ENCODE measurements at regions of chr22 and their contacts with region 1.

Region 1: GRCh38 chr22:31646186-31647089 is 15.6 kb downstream of the PISD start:
- DNase-seq: peak; percentile 99
- H3K4me3 ChIP-seq: no peak overlapping the region
- H3K27ac ChIP-seq: peak overlapping the region; percentile 95
- H3K4me1 ChIP-seq: peaks cover 47% of the 10 kb centered on the region
- H3K27me3 ChIP-seq: no peaks in the 10 kb centered on the region
- CTCF ChIP-seq: no peak

Region 2: DNA sequence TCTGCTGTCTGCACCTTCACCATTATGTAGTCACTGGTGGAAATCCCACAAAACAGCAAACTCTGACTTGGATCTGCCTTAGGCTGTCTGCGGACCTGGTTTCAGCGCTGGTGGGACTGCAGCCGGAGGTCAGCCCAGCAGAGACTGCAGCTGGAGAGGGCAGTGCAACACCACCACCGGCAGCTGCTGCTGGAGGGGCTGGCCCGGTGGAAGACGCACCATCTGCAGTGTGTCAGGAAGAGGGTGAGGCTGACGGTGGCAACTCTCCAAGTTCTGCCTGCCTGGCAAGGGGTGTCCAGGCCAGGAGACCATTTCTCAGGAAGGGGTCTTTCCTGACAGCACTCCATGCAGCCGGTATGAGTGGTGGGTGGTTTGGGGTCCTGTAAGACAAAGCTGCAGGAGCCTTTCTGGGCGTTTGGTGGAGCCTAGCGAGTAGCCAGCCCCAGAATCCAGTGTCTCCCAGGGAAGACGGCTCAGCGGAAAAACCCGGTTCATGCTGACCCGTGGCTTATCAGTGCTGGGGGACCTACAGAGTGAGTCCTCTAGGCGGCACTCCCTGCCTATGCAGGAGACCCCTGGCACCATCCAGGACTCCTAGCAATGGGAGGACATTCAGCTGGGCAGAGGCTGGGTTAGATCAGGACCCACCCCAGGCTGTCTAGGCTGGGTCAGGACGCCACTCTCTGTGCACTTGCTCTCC is 35.2 kb before region 1 on chr22:
- CTCF ChIA-PET with region 1: no interaction called
- dilution Hi-C with region 1: no loop called
- in situ Hi-C with region 1: no loop called
- intact Hi-C with region 1: no loop called
- DNase-seq: no peak
- H3K4me3 ChIP-seq: no peak overlapping the region
- H3K27ac ChIP-seq: no peak overlapping the region
- H3K4me1 ChIP-seq: no peaks in the 10 kb centered on the region
- H3K27me3 ChIP-seq: no peaks in the 10 kb centered on the region
- CTCF ChIP-seq: no peak

Region 3: GRCh38 chr22:31707519-31707918 is 61.1 kb after region 1 on chr22:
- CTCF ChIA-PET with region 1: no interaction called
- dilution Hi-C with region 1: loop called (anchors 10 kb)
- in situ Hi-C with region 1: no loop called
- intact Hi-C with region 1: no loop called
- DNase-seq: no peak
- H3K4me3 ChIP-seq: no peak overlapping the region
- H3K27ac ChIP-seq: no peak overlapping the region
- H3K4me1 ChIP-seq: no peaks in the 10 kb centered on the region
- H3K27me3 ChIP-seq: no peaks in the 10 kb centered on the region
- CTCF ChIP-seq: no peak

Region 4: DNA sequence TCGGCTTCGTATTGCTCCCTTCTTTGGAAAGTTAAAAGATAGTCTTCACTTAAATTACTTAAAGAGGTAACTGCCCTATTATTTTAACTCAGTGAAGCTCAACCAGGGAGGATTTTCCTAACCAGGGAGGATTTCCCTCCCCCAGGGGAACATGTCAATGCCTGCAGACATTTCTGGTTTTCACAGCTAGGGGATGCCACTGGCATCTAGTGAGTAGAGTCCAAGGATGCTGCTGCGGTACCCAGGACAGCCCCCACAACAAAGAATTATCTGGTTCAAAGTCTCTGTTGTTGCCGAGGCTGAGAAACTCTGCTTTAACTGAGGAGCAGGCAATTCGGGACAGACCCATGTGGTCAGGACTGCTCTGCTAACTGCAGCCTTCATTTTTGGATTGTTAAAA is 189.6 kb after region 1 on chr22:
- CTCF ChIA-PET with region 1: no interaction called
- dilution Hi-C with region 1: loop called (anchors 5 kb)
- in situ Hi-C with region 1: no loop called
- intact Hi-C with region 1: no loop called
- DNase-seq: no peak
- H3K4me3 ChIP-seq: no peak overlapping the region
- H3K27ac ChIP-seq: no peak overlapping the region
- H3K4me1 ChIP-seq: peaks cover 26% of the 10 kb centered on the region
- H3K27me3 ChIP-seq: no peaks in the 10 kb centered on the region
- CTCF ChIP-seq: peak in 1 of 2 donors; percentile 14